GM18951 (cell line): ENCODE measurements at regions of chr20 and their contacts with region 1.

Region 1: DNA sequence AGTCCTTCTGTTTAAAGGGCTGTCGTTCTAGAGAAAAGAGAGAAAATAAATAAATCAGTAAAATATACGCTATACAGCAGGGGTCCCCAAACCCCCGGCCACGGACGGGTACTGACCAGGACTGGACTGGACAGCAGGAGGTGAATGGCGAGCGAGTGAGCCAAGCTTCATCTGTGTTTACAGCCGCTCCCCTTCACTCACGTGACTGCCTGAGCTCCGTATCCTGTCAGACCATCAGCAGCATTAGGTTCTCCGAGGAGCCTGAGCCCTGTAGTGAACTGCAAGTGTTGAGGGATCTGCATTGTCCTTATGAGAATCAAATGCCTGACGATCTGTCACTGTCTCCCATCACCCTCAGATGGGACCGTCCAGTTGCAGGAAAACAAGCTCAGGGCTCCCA is 76.5 kb downstream of the ZNF217 start:
- POLR2A ChIP-seq: no peak

Region 2: DNA sequence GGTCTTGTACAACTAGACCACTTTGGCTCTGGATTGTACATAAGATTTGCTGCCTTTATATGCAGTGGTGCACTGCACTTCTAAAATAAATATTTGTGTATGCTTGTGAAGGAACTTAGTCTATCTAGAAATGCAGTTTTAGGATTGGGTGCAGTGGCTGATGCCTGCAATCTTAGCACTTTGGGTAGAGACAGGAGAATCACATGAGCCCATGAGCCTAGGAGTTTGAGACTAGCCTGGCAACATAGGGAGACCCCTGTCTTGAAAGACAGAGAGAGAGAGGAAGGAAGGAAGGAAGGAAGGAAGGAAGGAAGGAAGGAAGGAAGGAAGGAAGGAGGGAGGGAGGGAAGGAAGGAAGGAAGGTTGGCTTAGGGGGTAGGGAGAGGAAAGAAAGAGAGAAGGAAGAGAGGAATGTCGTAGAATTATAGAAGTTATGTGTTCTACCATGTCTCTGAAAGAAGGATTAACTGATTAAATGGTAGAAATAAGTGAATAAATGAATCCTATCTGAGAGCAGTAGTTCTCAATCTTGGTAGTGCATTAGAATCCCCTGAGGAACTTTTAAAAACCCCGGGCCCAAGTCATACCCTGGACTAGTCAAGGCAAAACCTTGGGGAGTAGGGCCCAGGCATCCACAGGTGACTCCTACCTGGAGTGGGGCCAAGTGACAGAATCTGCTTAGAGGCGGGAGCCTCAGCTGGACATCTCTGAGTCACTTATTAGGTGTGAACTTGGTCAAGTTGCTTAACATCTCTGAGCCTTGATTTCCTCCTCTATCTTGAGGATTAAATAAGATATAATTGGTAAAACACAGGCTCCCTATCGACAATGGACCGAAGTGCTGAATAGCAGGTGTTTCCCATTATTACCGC is 53.8 kb before region 1 on chr20:
- in situ Hi-C with region 1: loop called (anchors 5 kb)
- POLR2A ChIP-seq: no peak

Region 3: GRCh38 chr20:54199721-54200176 is 682.6 kb after region 1 on chr20:
- in situ Hi-C with region 1: no loop called
- POLR2A ChIP-seq: no peak